Activated CD8-positive, alpha-beta memory T cell treated with anti-CD3 and anti-CD28 coated beads, Interleukin-2, amount 10 ng/mL, durations not matched to agents 7 days and 5 days (primary cell): ENCODE measurements at regions of chr2 and their contacts with region 1.

Region 1: GRCh38 chr2:8544786-8545694 is 136.8 kb upstream of the ID2 start:
- DNase-seq: peak; percentile 97
- ATAC-seq: peak; percentile 83
- H3K4me3 Mint-ChIP-seq: no peak overlapping the region
- H3K27ac Mint-ChIP-seq: peak overlapping the region; percentile 100
- H3K4me1 Mint-ChIP-seq: peaks cover 76% of the 10 kb centered on the region
- H3K27me3 Mint-ChIP-seq: no peaks in the 10 kb centered on the region

Region 2: DNA sequence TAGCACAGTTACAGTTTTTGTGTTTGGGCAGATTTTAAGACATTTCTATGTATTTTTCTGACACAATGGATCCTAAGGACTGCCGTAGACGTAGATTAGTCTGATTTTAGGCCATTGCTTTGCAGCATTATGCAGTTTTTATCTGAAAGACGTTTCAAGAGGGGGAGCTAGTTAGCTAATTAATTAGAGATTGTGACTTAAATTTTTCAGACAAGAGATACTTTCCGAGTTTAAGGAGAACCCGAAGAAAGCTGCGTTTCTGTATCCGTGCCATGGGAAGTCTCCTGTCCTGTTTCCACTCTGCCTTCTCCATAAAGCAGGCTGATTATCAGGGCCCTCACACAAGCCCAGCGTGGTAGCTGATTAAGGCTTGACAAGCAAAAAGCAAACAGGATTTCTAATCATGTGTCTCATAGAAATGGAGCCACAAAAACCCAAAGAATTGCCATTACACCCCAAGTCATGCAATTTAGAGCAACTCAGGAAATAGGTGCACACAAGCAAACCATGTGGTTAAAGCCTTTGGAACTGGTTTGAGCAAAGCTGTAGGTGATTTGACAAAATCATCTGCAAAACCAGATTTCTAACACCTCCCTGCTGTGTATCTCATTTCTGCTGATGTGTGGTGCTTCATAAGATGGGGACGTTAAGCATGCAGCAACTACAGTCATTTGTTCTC is 819.7 kb before region 1 on chr2:
- CTCF ChIA-PET with region 1: interaction called, 11 read pairs
- DNase-seq: peak; percentile 84
- ATAC-seq: peak; percentile 73
- H3K4me3 Mint-ChIP-seq: peak overlapping the region; percentile 90
- H3K27ac Mint-ChIP-seq: peak overlapping the region; percentile 97
- H3K4me1 Mint-ChIP-seq: peaks cover 51% of the 10 kb centered on the region
- H3K27me3 Mint-ChIP-seq: no peaks in the 10 kb centered on the region

Region 3: GRCh38 chr2:8432706-8433336 is 112.2 kb before region 1 on chr2:
- CTCF ChIA-PET with region 1: no interaction called
- DNase-seq: peak; percentile 40
- ATAC-seq: peak; percentile 76
- H3K4me3 Mint-ChIP-seq: peak overlapping the region; percentile 34
- H3K27ac Mint-ChIP-seq: peak overlapping the region; percentile 80
- H3K4me1 Mint-ChIP-seq: peaks cover 22% of the 10 kb centered on the region
- H3K27me3 Mint-ChIP-seq: no peaks in the 10 kb centered on the region

Region 4: DNA sequence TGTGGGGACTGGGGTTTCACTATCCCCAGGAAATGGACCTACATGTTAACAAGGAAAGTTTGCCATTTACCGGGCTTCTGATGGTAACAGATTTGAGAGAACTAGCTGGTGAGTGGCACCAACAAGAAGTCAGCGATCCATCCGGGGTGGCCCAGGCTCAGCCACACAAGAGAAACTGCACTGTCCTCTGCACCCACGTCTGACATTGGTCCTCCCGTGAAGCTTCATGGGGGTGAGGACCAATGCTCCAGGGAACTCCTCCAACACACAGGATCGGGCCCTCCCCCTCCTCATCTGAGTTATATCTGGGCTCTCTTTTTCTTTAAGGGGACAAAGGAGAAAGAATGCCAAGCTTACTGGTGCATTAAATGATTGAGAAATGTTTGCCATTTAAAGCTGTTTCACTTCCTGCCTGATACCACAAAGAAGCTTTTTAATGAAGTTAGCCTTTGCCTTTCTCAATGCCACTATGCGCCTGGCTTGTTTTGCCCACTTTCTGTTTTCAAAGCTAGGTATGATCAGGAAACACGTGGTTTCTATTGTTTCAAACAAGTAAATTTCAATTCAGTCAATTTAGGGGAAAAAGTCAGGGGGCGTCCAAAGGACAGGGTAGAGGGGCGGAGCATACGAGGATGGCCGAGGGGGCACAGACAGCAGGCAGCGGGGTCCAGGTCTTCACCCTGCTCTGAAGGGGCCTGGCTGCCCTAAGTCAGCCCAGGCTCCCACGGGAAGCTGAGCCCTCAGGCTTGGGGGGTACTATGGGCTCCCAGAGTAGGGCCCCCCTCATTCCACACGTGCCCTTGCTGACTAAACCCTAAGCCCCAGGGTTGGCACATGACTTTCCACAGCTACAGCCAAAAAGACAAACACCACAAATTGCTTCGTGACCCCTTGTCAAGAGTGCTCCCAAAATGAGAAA is 67.2 kb before region 1 on chr2:
- CTCF ChIA-PET with region 1: interaction called, 32 read pairs
- DNase-seq: peak; percentile 63
- ATAC-seq: peak; percentile 37
- H3K4me3 Mint-ChIP-seq: peak overlapping the region; percentile 46
- H3K27ac Mint-ChIP-seq: peak overlapping the region; percentile 94
- H3K4me1 Mint-ChIP-seq: peaks cover 94% of the 10 kb centered on the region
- H3K27me3 Mint-ChIP-seq: no peaks in the 10 kb centered on the region

Region 5: GRCh38 chr2:8488001-8488738 is 56.9 kb before region 1 on chr2:
- CTCF ChIA-PET with region 1: interaction called, 18 read pairs
- DNase-seq: peak; percentile 80
- ATAC-seq: peak; percentile 76
- H3K4me3 Mint-ChIP-seq: peak overlapping the region; percentile 74
- H3K27ac Mint-ChIP-seq: peak overlapping the region; percentile 87
- H3K4me1 Mint-ChIP-seq: peaks cover 73% of the 10 kb centered on the region
- H3K27me3 Mint-ChIP-seq: no peaks in the 10 kb centered on the region

Region 6: DNA sequence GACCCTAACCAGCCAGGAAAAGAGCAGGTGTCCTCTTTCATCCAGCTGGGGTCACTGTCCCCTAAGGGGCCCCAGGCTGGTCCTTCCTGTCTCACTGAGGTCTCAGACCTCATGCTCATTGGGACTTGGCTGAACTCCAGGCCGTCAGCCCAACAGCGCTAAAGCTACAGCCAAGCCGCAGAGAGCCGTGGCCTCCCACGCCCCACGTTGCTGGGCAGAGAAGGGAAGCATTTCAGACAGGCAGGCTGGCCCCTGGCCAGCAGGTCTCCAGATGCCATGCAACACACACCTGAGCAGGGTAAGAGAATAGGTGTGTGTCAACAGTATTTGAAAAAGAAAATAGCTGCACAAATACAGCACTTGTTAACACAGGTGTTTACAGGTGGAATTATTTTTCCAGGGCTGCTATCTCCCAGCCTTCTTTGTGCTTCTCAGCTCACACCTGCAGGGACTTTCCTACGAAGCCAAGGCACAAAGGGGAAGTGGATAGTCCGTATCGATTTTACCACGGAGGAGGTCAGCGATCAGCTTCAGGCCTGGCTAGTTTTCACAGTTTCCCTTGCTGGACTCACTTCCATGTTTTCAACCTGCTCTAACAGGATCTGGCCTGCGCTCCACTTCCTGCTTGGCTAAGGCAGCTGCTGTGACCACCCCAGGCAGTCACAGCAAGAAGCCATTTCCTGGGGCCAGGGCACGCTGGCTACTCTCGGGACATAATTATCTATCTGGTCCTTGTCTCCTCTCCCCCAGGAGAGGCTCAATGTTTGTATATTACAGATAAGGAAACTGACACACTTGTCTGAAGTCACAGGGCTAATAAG is 19.2 kb before region 1 on chr2:
- CTCF ChIA-PET with region 1: interaction called, 117 read pairs
- DNase-seq: no peak
- ATAC-seq: no peak
- H3K4me3 Mint-ChIP-seq: no peak overlapping the region
- H3K27ac Mint-ChIP-seq: no peak overlapping the region
- H3K4me1 Mint-ChIP-seq: peaks cover 48% of the 10 kb centered on the region
- H3K27me3 Mint-ChIP-seq: no peaks in the 10 kb centered on the region

Region 7: DNA sequence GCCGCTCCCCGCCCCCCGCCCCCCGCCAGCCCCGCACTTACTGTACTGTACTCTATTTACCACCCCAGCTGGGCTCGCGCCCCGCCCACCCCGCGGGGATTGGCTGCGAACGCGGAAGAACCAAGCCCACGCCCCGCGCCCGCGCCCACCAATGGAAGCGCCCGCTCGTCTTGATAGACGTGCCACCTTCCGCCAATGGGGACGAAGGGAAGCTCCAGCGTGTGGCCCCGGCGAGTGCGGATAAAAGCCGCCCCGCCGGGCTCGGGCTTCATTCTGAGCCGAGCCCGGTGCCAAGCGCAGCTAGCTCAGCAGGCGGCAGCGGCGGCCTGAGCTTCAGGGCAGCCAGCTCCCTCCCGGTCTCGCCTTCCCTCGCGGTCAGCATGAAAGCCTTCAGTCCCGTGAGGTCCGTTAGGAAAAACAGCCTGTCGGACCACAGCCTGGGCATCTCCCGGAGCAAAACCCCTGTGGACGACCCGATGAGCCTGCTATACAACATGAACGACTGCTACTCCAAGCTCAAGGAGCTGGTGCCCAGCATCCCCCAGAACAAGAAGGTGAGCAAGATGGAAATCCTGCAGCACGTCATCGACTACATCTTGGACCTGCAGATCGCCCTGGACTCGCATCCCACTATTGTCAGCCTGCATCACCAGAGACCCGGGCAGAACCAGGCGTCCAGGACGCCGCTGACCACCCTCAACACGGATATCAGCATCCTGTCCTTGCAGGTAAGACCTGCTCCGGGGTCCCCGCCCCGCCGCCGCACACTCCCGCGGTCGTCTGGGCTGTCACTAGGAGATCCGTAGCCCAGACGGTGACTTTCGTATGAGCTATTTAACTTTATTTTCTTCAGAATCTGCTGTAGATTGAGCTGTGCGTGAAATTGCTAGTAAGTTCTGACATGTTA is 137.0 kb after region 1 on chr2 and contains the start of gene ID2:
- CTCF ChIA-PET with region 1: interaction called, 29 read pairs
- DNase-seq: peak; percentile 99
- ATAC-seq: peak; percentile 69
- H3K4me3 Mint-ChIP-seq: peak within 1 kb of the TSS; percentile 97
- H3K27ac Mint-ChIP-seq: peak within 1 kb of the TSS; percentile 93
- H3K4me1 Mint-ChIP-seq: peaks cover 34% of the 10 kb centered on the region
- H3K27me3 Mint-ChIP-seq: peaks cover 10% of the 10 kb centered on the region
- total RNA-seq, gene ID2: 342 to 431 TPM